ENCODE measurements at regions of chr11 and their contacts with region 1.

Region 1: GRCh38 chr11:7442588-7443215 is 42.6 kb upstream of the OLFML1 start:
- DNase-seq: peak in 2 of 3 donors; percentile 78 to 85
- ATAC-seq: peak; percentile 88
- H3K4me3 ChIP-seq: no peak overlapping the region
- H3K4me1 ChIP-seq: no peaks in the 10 kb centered on the region
- CTCF ChIP-seq: peak; percentile 86

Region 2: DNA sequence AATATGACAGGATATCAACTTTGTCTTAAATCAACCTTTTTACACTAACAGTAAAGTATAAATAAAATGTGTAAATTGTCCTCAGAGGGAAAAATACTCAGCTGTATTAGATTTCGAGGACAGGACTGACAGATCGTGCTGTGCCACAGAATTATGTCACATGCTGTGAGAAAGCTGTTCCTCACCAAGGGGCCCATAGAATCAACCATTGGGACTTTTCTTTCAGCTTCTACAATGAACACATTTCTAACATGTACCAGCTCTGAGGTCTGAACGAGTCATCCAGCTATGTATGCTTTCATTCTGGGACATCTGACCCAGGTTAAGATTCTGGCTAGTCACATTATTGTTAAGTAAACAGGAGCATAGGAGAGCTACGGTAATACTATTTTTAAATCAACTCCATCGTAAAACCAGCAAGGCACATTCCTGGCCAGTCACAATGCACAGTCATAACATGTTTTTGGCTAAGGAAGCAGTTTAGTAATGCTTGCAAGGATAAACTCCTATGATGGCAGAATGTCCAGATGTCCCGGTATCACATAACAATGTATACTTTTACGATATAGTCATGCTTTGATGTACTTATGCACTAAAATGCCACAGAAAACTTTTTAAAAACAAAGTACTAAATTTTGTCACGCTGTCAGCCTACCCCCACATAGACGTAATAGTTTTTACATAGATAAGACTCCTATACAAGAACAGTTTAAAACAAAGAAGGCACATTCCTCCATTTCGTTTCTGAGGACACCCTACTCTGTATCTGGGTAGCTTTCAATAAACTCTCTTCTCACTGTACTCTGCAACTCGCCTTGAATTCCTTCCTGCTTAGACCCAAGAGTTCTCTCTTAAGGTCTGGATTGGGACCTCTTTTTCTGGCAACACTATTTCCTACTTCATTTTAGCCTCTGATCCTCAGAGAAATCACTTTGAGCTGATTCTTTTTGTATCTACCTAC is 450.0 kb before region 1 on chr11:
- intact Hi-C with region 1: no loop called
- DNase-seq: no peak
- ATAC-seq: no peak
- H3K4me3 ChIP-seq: no peak overlapping the region
- H3K4me1 ChIP-seq: no peaks in the 10 kb centered on the region
- CTCF ChIP-seq: no peak

Region 3: GRCh38 chr11:7098235-7098832 is 344.4 kb before region 1 on chr11:
- intact Hi-C with region 1: loop called in 1 of 2 experiments (anchors 10 kb)
- DNase-seq: peak in 1 of 3 donors; percentile 2
- ATAC-seq: peak; percentile 56
- H3K4me3 ChIP-seq: no peak overlapping the region
- H3K4me1 ChIP-seq: no peaks in the 10 kb centered on the region
- CTCF ChIP-seq: no peak